B cell (primary cell): ENCODE measurements at regions of chr1 and their contacts with region 1.

Region 1: GRCh38 chr1:31789259-31790065 is 25.3 kb upstream of the ADGRB2 start:
- DNase-seq: peak; percentile 93
- ATAC-seq: peak; percentile 76
- H3K4me3 ChIP-seq: peak overlapping the region in 4 of 5 experiments; percentile 61 to 91 (median 76)
- H3K4me3 Mint-ChIP-seq: peak overlapping the region; percentile 96
- H3K27ac ChIP-seq: peak overlapping the region; percentile 73 to 88
- H3K27ac Mint-ChIP-seq: peak overlapping the region; percentile 98
- H3K4me1 ChIP-seq: peaks cover 26 to 34% of the 10 kb centered on the region in 2 donors
- H3K4me1 Mint-ChIP-seq: peaks cover 35% of the 10 kb centered on the region
- H3K27me3 ChIP-seq: peaks cover 0 to 3% (median 0%) of the 10 kb centered on the region in 4 experiments
- H3K27me3 Mint-ChIP-seq: peaks cover 3% of the 10 kb centered on the region
- CTCF ChIP-seq: peak; percentile 79

Region 2: DNA sequence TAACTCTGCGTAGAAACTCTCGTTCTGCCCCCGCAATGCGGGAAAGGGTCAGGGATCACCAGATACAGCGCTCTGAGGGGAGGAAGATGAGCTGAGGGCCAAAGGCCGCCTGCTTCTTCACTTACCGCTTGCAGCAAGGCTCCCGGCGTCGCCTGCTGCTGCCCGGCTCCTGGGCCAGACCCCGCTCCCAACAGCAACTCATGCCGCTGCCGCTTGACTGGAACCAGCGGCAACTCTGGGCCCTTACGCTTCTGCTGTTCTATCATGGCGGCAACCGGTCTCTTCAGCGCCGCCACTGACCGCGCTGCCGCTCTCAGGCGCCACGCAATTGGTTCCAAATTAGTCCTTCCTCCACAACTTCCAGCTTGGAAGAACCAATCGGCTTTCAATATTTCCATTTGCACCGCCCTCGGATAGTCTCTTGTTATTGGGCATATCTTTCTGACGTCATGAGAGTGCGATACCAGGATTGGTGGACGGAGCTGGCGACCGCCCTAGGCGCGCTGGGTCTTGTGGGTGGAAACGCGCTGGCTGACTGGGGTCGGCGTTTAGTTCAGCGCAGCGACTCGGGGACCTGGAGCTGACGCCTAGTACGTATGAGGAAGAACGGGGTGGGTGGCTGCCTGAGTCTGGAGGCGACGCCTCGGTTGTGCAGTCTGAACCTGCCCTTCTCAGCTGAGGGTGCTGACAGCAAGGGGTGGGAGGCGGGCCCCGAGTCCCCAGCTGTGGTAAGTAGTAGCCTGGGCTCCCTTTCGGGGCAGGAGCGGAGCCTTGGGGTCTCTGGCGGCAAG is 492.8 kb before region 1 on chr1 and contains the starts of genes SNRNP40 and ZCCHC17:
- CTCF ChIA-PET with region 1: interaction called, 3 read pairs
- POLR2A ChIA-PET with region 1: no interaction called
- intact Hi-C with region 1: loop called (anchors 2 kb)
- DNase-seq: peak; percentile 98
- ATAC-seq: peak; percentile 97
- H3K4me3 ChIP-seq: peak within 1 kb of the TSS; percentile 68 to 99 (median 77)
- H3K4me3 Mint-ChIP-seq: no peak within 1 kb of the TSS
- H3K27ac ChIP-seq: peak within 1 kb of the TSS; percentile 82 to 93
- H3K27ac Mint-ChIP-seq: peak within 1 kb of the TSS; percentile 63
- H3K4me1 ChIP-seq: peaks cover 23 to 25% of the 10 kb centered on the region in 2 donors
- H3K4me1 Mint-ChIP-seq: peaks cover 24% of the 10 kb centered on the region
- H3K27me3 ChIP-seq: no peaks in the 10 kb centered on the region
- H3K27me3 Mint-ChIP-seq: no peaks in the 10 kb centered on the region
- CTCF ChIP-seq: no peak
- total RNA-seq, gene SNRNP40: 65.6 and 67.7 TPM in 2 replicates
- total RNA-seq, gene ZCCHC17: 20.3 and 21.5 TPM in 2 replicates

Region 3: DNA sequence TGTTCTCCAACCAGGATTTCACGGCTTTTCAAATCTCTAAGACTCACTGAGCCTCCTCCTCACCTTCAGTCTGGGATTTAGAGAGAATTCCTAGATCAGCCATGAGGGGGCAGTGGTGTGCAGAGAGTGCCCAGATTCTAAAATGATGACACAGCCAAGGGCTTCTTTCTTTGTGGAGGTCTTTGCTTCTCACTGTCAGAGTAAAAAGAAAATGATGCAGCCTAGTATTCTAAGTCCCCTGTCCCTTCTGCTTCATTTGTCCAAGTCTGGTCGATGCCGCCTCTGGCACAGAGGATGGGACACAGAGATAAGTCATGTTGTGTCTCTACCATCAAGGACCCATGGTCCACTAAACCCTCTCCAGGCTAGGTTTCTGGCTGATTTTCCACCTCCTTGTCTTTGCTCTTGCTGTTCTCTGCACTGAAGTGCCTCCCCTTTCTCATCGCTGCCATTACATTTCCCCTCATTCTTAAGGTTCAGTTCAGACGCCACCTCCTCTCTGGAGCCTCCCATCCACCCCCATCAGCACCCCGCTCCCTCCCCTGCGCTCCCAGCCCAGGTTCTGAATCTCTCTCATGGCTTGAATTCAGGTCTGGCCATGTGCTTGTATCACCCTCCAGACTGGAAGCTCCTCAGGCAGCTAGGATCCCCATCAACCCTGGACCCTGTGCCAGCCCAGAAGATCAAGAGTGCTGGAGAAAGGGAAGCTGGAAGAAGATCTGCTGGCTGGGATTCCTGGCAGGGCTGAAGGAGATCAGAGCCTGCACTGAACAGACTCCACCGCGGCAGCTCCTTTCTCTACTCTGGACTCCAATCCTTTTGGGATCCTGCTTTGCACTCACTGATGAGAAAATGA is 225.1 kb before region 1 on chr1:
- CTCF ChIA-PET with region 1: interaction called, 44 read pairs
- POLR2A ChIA-PET with region 1: no interaction called
- intact Hi-C with region 1: loop called (anchors 1 kb)
- DNase-seq: peak; percentile 63
- ATAC-seq: peak; percentile 69
- H3K4me3 ChIP-seq: no peak overlapping the region
- H3K4me3 Mint-ChIP-seq: no peak overlapping the region
- H3K27ac ChIP-seq: no peak overlapping the region
- H3K27ac Mint-ChIP-seq: no peak overlapping the region
- H3K4me1 ChIP-seq: no peaks in the 10 kb centered on the region
- H3K4me1 Mint-ChIP-seq: no peaks in the 10 kb centered on the region
- H3K27me3 ChIP-seq: peaks cover 0 to 4% (median 2%) of the 10 kb centered on the region in 4 experiments
- H3K27me3 Mint-ChIP-seq: peaks cover 33% of the 10 kb centered on the region
- CTCF ChIP-seq: peak; percentile 87

Region 4: DNA sequence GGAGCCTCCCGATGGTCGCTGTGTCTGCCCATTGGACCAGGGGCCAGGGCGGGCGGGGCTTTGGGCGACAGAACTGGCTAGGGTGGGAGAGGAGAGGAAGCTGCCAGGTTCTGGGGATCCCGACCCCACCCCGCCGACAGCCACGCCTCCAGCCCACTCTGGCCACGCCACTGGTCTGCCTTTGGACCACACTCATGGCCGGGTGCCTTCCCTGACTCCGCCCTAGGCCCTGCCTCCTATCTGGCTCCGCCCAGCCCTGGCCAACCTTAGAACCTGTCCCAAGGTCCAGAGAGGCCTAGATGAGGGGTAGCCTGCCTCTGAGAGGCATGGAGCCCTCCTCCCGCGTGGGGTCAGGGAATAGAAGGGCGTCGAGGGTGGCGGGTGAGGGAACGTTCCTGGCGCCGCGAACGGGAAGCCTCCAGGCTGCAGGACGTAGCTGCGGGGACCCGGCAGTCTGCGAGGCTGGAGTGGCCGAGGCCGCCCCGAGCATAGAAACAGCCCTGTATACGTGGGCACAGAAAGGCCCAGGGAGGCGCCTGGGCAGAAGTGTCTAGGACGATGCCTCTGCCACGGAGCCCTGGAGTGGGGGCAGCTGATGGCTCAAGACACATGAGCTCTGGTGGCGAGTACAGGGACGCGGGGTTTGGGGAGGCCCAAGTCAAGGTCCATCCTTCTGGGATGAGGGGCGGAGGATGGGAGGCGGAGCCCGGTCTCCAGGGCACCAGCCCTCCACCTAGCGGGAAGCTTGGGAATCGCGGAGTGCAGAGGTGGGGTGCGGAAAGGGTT is 74.2 kb before region 1 on chr1:
- CTCF ChIA-PET with region 1: interaction called, 74 read pairs
- POLR2A ChIA-PET with region 1: interaction called, 3 read pairs
- intact Hi-C with region 1: loop called (anchors 1 kb)
- DNase-seq: peak; percentile 46
- ATAC-seq: peak; percentile 77
- H3K4me3 ChIP-seq: peak overlapping the region in 4 of 5 experiments; percentile 33 to 64 (median 54)
- H3K4me3 Mint-ChIP-seq: peak overlapping the region; percentile 76
- H3K27ac ChIP-seq: no peak overlapping the region
- H3K27ac Mint-ChIP-seq: no peak overlapping the region
- H3K4me1 ChIP-seq: peaks cover 19% of the 10 kb centered on the region in 2 donors
- H3K4me1 Mint-ChIP-seq: peaks cover 21% of the 10 kb centered on the region
- H3K27me3 ChIP-seq: peaks cover 0 to 45% (median 10%) of the 10 kb centered on the region in 4 experiments
- H3K27me3 Mint-ChIP-seq: peaks cover 56% of the 10 kb centered on the region
- CTCF ChIP-seq: peak; percentile 62

Region 5: DNA sequence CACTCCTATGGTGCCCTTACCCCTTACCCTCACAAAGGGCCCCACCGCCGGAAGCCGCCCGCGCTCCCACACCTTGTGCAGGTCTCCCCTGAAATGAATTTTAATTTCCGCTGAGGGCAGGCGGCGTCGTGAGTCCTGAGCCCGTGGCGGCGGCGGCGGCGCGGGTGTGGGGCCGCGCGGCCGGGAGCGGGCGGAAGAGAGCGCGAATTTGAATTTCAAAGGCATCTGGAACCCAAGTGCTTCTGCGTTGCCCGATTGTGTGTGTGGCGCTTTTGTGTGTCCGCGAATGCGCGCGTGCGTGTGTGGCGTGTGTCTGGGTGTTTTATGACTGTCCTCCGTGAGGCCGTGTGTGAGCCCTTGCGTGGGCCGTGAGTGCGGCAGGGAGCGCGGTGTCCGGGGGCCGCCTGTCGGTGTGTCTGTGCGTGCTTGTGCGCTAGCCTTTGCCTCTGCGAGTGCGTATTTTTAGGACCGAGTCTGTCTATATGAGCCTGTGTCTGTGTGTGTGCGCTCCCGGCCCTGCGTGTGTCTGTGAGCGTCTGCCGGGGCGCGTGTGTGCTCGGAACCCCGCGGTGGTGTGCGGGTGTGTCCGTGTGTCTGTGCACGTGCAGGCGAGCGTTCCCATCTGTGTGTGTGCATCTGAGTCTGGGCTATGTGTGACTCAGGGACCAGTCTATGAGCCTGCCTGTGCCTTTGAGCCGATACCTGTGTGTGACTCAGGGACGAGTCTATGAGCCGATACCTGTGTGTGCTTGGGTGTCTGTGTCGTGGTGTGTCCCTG is 17.4 kb before region 1 on chr1:
- CTCF ChIA-PET with region 1: interaction called, 199 read pairs
- POLR2A ChIA-PET with region 1: no interaction called
- intact Hi-C with region 1: loop called (anchors 1 kb)
- DNase-seq: peak; percentile 61
- ATAC-seq: peak; percentile 44
- H3K4me3 ChIP-seq: peak overlapping the region; percentile 22 to 64 (median 45)
- H3K4me3 Mint-ChIP-seq: peak overlapping the region; percentile 93
- H3K27ac ChIP-seq: no peak overlapping the region
- H3K27ac Mint-ChIP-seq: peak overlapping the region; percentile 57
- H3K4me1 ChIP-seq: peaks cover 38 to 39% of the 10 kb centered on the region in 2 donors
- H3K4me1 Mint-ChIP-seq: peaks cover 38% of the 10 kb centered on the region
- H3K27me3 ChIP-seq: peaks cover 0 to 56% (median 39%) of the 10 kb centered on the region in 4 experiments
- H3K27me3 Mint-ChIP-seq: peaks cover 49% of the 10 kb centered on the region
- CTCF ChIP-seq: no peak

Region 6: GRCh38 chr1:31944205-31945089 is 155.0 kb after region 1 on chr1:
- CTCF ChIA-PET with region 1: interaction called, 12 read pairs
- POLR2A ChIA-PET with region 1: interaction called, 3 read pairs
- intact Hi-C with region 1: loop called (anchors 10 kb)
- DNase-seq: peak; percentile 82
- ATAC-seq: peak; percentile 83
- H3K4me3 ChIP-seq: peak overlapping the region; percentile 23 to 88 (median 66)
- H3K4me3 Mint-ChIP-seq: peak overlapping the region; percentile 90
- H3K27ac ChIP-seq: peak overlapping the region; percentile 87 to 88
- H3K27ac Mint-ChIP-seq: peak overlapping the region; percentile 96
- H3K4me1 ChIP-seq: peaks cover 41 to 46% of the 10 kb centered on the region in 2 donors
- H3K4me1 Mint-ChIP-seq: peaks cover 36% of the 10 kb centered on the region
- H3K27me3 ChIP-seq: no peaks in the 10 kb centered on the region
- H3K27me3 Mint-ChIP-seq: no peaks in the 10 kb centered on the region
- CTCF ChIP-seq: no peak

Region 7: GRCh38 chr1:32063261-32063681 is 273.8 kb after region 1 on chr1:
- CTCF ChIA-PET with region 1: interaction called, 15 read pairs
- POLR2A ChIA-PET with region 1: no interaction called
- intact Hi-C with region 1: loop called (anchors 2 kb)
- DNase-seq: peak; percentile 56
- ATAC-seq: peak; percentile 53
- H3K4me3 ChIP-seq: no peak overlapping the region
- H3K4me3 Mint-ChIP-seq: no peak overlapping the region
- H3K27ac ChIP-seq: no peak overlapping the region
- H3K27ac Mint-ChIP-seq: no peak overlapping the region
- H3K4me1 ChIP-seq: peaks cover 8 to 11% of the 10 kb centered on the region in 2 donors
- H3K4me1 Mint-ChIP-seq: peaks cover 5% of the 10 kb centered on the region
- H3K27me3 ChIP-seq: no peaks in the 10 kb centered on the region
- H3K27me3 Mint-ChIP-seq: no peaks in the 10 kb centered on the region
- CTCF ChIP-seq: peak; percentile 70